Left colon (tissue), 2 donors: ENCODE measurements at regions of chr9 and their contacts with region 1.

Region 1: DNA sequence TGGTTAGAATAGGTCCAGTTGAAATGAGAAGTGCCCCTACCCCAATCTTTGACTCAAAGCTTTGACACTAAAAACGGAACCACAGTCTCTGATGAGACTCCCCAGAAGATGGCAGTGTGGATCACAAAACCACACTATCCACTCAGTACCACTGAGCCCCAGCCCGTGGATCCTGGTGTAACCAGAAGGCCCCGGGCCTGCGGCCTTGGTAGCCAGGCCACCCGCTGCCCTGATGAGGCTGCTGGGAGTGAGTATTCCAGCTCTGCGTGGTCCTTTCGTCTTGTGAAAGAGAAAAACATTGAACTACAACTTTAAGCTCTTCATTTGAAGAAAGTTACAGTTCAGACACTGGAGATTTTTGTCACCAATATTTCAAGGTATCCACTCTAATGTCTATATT is 42.2 kb upstream of the FBP1 start:
- DNase-seq: peak; percentile 60 to 72
- ATAC-seq: peak; percentile 94

Region 2: DNA sequence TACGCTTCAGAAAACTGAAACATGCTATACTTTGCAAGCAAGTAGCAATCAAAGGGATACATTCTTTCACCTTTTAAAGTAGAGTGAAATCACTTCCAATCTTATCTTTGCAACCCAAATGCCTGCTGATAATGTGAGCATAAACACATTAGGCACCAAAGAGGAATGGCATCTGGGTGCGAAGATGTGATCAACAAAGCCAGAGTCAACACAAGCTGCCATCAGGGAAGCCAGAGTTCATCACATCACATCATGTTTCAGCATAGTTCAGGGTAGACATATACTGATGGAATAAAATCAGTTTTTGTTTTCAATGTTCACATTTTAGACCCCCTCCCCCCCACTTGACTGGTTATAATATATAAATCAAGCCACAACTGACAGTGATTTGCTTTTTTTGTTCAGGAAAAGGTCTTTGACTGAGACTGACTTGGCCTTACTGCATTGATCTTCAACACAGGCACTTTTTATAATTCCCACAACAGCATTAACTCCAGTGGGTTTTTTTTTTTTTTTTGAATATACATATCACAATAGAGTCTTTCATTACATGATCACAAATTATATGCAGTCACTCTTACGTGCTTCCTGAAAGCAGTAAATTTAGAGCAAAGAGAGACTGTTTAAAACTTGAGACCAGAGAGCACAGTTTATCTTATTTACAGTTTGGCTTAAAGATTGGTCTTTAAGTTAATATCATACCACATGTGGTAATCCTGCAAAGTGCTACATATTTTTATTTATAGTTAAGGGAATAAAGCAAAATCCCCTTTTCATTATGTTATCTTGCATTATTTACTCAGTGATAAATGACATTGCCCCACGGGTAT is 65.2 kb after region 1 on chr9:
- intact Hi-C with region 1: no loop called
- DNase-seq: no peak
- ATAC-seq: peak; percentile 37

Region 3: GRCh38 chr9:94757158-94757557 is 75.7 kb after region 1 on chr9:
- intact Hi-C with region 1: no loop called
- DNase-seq: no peak
- ATAC-seq: no peak

Region 4: DNA sequence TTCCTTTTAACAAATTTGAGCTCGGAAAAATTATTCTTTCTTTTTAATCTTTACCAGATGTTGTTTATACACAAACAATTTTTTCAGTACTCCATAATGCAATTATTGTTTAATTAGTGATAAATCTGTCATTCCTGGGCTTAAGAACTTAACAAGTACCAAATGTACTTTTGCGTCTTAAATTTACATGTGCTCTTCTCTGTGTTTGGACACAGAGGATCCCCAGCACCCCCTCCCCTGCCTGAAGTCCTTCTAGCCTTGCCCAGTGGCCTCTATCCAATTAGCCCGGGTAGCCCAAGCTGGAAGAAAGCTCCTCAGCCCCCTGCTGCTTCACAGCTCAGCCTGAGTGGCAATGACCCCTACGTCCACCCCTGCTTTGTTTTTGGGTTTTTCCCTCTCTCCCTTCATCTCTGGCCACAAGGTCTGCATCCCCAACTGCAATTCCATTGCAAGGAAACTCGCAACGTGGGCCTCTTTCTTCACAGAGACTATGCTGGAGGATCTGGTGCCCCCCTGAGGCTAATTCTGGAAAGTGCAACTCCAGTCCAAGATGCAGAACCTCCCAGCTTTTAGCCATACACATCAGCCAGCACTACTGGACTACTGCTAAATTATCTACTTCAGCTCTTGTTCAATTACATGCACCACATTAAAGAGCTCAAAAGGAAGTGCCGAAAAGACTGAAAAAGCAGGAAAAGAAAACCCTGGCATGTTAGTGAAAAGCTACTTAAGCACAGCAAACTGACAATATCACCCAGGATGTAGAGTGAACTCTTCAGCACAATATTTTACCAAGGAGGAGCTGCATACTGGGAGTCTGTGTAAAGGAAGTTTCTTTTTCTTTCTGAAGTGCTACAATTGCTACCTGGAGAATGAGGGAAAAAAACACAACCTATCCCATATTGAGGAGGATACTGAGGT is 449.8 kb after region 1 on chr9:
- intact Hi-C with region 1: loop called in 1 of 2 experiments (anchors 5 kb)
- DNase-seq: peak; percentile 60 to 71
- ATAC-seq: peak; percentile 42